Endothelial cell of umbilical vein (primary cell): ENCODE measurements at regions of chr16 and their contacts with region 1.

Region 1: GRCh38 chr16:64159976-64160375 is 961.9 kb downstream of the CDH11 start:
- DNase-seq: no peak
- H3K4me3 ChIP-seq: no peak overlapping the region
- H3K27ac ChIP-seq: no peak overlapping the region
- H3K4me1 ChIP-seq: peaks cover 34% of the 10 kb centered on the region
- H3K27me3 ChIP-seq: no peaks in the 10 kb centered on the region
- CTCF ChIP-seq: no peak
- POLR2A ChIP-seq: no peak

Region 2: DNA sequence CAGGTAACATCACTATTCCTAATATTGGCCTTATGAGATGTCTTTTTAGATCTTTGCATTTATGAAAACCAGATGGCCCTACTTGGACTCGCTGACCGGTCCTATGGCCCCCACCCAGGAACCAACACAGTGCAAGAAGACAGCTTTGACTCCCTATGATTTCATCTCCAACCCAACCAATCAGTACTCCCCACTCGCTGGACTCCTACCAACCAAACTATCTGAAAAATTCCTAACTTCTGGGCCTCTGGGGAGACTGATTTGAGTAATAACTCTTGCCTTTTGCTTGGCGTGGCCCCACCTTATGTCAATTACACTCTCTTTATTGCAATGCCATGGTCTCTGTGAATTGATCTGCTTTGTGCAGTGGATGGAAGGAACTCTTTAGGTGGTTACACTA is 133.0 kb after region 1 on chr16:
- CTCF ChIA-PET with region 1: no interaction called
- POLR2A ChIA-PET with region 1: no interaction called
- dilution Hi-C with region 1: no loop called
- intact Hi-C with region 1: no loop called
- DNase-seq: no peak
- H3K4me3 ChIP-seq: no peak overlapping the region
- H3K27ac ChIP-seq: no peak overlapping the region
- H3K4me1 ChIP-seq: no peaks in the 10 kb centered on the region
- H3K27me3 ChIP-seq: no peaks in the 10 kb centered on the region
- CTCF ChIP-seq: no peak
- POLR2A ChIP-seq: no peak

Region 3: DNA sequence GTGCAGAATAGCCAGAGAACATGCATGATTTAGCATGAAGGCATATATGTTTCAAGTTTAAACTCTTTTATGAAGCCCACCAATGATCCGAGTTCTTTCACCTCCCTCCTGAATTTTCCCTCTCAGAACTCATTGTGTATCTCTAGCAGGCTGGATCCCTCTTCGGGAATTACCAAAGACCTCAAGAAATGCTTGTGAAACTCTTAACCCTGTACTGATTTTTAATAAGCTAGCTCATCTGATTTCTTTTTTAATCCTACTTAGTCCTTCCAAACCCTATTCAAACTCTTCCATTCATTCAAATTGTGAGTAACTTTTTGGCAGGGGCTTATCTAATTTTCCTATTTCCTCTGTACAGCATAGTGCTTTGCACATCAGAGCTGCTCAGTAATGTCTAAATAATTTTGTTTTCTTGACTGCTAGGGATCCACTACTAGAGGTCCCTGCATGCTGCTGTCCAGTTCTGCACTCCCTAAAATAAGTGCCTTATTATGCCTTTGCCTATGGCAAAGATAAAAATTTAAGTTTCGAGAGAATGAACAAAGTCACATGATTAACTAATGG is 238.1 kb after region 1 on chr16:
- CTCF ChIA-PET with region 1: no interaction called
- POLR2A ChIA-PET with region 1: no interaction called
- dilution Hi-C with region 1: no loop called
- intact Hi-C with region 1: loop called (anchors 5 kb)
- DNase-seq: peak; percentile 75
- H3K4me3 ChIP-seq: peak overlapping the region in 1 of 3 experiments; percentile 5
- H3K27ac ChIP-seq: peak overlapping the region; percentile 78
- H3K4me1 ChIP-seq: peaks cover 44% of the 10 kb centered on the region
- H3K27me3 ChIP-seq: no peaks in the 10 kb centered on the region
- CTCF ChIP-seq: no peak
- POLR2A ChIP-seq: peak; percentile 22

Region 4: GRCh38 chr16:64416216-64417005 is 256.4 kb after region 1 on chr16:
- CTCF ChIA-PET with region 1: no interaction called
- POLR2A ChIA-PET with region 1: no interaction called
- dilution Hi-C with region 1: no loop called
- intact Hi-C with region 1: loop called (anchors 5 kb)
- DNase-seq: peak; percentile 64
- H3K4me3 ChIP-seq: peak overlapping the region; percentile 3 to 45 (median 3)
- H3K27ac ChIP-seq: peak overlapping the region; percentile 5
- H3K4me1 ChIP-seq: peaks cover 4% of the 10 kb centered on the region
- H3K27me3 ChIP-seq: no peaks in the 10 kb centered on the region
- CTCF ChIP-seq: no peak
- POLR2A ChIP-seq: no peak

Region 5: DNA sequence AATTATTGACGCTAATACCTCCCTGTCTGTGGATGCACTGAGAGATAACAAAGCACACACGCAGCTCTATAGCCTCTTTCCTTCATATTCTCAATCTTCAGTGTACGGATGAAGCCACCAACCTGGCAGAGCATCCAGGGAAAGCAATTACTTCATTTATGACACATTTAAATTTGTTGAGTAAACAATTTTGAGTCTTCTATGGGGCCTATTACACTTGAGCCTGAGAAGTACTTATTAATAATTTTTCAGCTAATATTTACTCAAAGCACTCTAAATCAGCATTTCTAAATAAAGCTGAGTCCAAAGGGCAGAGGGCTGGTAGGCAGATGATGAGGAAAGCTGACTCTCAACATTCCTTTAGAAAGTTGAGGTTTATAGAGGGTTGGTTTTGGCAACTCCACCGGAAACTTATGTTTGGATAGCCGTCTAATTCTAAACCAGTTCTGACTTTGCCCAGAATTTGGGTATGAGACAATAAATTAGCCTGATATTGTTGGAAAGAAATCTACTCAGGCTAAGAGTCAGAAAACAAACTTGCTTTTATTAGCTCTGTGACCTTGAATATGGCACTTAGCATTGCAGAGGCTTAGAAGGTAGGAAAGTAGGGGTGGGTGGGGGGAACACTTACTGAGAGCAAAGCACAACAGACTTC is 318.4 kb after region 1 on chr16:
- CTCF ChIA-PET with region 1: interaction called, 3 read pairs
- POLR2A ChIA-PET with region 1: interaction called, 3 read pairs
- dilution Hi-C with region 1: no loop called
- intact Hi-C with region 1: loop called (anchors 5 kb)
- DNase-seq: peak; percentile 90
- H3K4me3 ChIP-seq: no peak overlapping the region
- H3K27ac ChIP-seq: peak overlapping the region; percentile 48
- H3K4me1 ChIP-seq: peaks cover 19% of the 10 kb centered on the region
- H3K27me3 ChIP-seq: no peaks in the 10 kb centered on the region
- CTCF ChIP-seq: no peak
- POLR2A ChIP-seq: no peak

Region 6: GRCh38 chr16:64648282-64648681 is 488.3 kb after region 1 on chr16:
- CTCF ChIA-PET with region 1: no interaction called
- POLR2A ChIA-PET with region 1: no interaction called
- dilution Hi-C with region 1: no loop called
- intact Hi-C with region 1: no loop called
- DNase-seq: no peak
- H3K4me3 ChIP-seq: no peak overlapping the region
- H3K27ac ChIP-seq: no peak overlapping the region
- H3K4me1 ChIP-seq: no peaks in the 10 kb centered on the region
- H3K27me3 ChIP-seq: no peaks in the 10 kb centered on the region
- CTCF ChIP-seq: no peak
- POLR2A ChIP-seq: no peak

Region 7: GRCh38 chr16:64964126-64964540 is 804.2 kb after region 1 on chr16:
- CTCF ChIA-PET with region 1: no interaction called
- POLR2A ChIA-PET with region 1: no interaction called
- dilution Hi-C with region 1: no loop called
- intact Hi-C with region 1: loop called (anchors 2 kb)
- DNase-seq: peak; percentile 85
- H3K4me3 ChIP-seq: no peak overlapping the region
- H3K27ac ChIP-seq: peak overlapping the region; percentile 94
- H3K4me1 ChIP-seq: peaks cover 20% of the 10 kb centered on the region
- H3K27me3 ChIP-seq: no peaks in the 10 kb centered on the region
- CTCF ChIP-seq: no peak
- POLR2A ChIP-seq: no peak

Region 8: GRCh38 chr16:65024767-65025178 is 864.8 kb after region 1 on chr16:
- CTCF ChIA-PET with region 1: no interaction called
- POLR2A ChIA-PET with region 1: no interaction called
- dilution Hi-C with region 1: no loop called
- intact Hi-C with region 1: loop called (anchors 5 kb)
- DNase-seq: peak; percentile 92
- H3K4me3 ChIP-seq: no peak overlapping the region
- H3K27ac ChIP-seq: peak overlapping the region; percentile 91
- H3K4me1 ChIP-seq: peaks cover 23% of the 10 kb centered on the region
- H3K27me3 ChIP-seq: no peaks in the 10 kb centered on the region
- CTCF ChIP-seq: no peak
- POLR2A ChIP-seq: peak; percentile 23

Region 9: GRCh38 chr16:65070831-65071432 is 911.0 kb after region 1 on chr16:
- CTCF ChIA-PET with region 1: no interaction called
- POLR2A ChIA-PET with region 1: no interaction called
- dilution Hi-C with region 1: no loop called
- intact Hi-C with region 1: loop called (anchors 5 kb)
- DNase-seq: peak; percentile 82
- H3K4me3 ChIP-seq: no peak overlapping the region
- H3K27ac ChIP-seq: no peak overlapping the region
- H3K4me1 ChIP-seq: peaks cover 16% of the 10 kb centered on the region
- H3K27me3 ChIP-seq: no peaks in the 10 kb centered on the region
- CTCF ChIP-seq: no peak
- POLR2A ChIP-seq: no peak